ENCODE measurements at regions of chr4 and their contacts with region 1.

Region 1: GRCh38 chr4:119628308-119629141 is at the start of gene PDE5A:
- DNase-seq: peak; percentile 89
- ATAC-seq: peak; percentile 87
- H3K4me3 Mint-ChIP-seq: peak within 1 kb of the TSS; percentile 74
- H3K27ac Mint-ChIP-seq: no peak within 1 kb of the TSS
- H3K4me1 Mint-ChIP-seq: peaks cover 15% of the 10 kb centered on the region
- H3K27me3 Mint-ChIP-seq: peaks cover 19% of the 10 kb centered on the region
- total RNA-seq, gene PDE5A: 0.25 to 0.47 TPM

Region 2: GRCh38 chr4:118981839-118982381 is 646.6 kb before region 1 on chr4:
- CTCF ChIA-PET with region 1: interaction called, 6 read pairs
- POLR2A ChIA-PET with region 1: no interaction called
- intact Hi-C with region 1: loop called (anchors 1 to 5 kb)
- DNase-seq: peak; percentile 73
- ATAC-seq: peak; percentile 60
- H3K4me3 Mint-ChIP-seq: no peak overlapping the region
- H3K27ac Mint-ChIP-seq: no peak overlapping the region
- H3K4me1 Mint-ChIP-seq: no peaks in the 10 kb centered on the region
- H3K27me3 Mint-ChIP-seq: peaks cover 7% of the 10 kb centered on the region

Region 3: GRCh38 chr4:119314356-119314755 is 314.2 kb before region 1 on chr4:
- CTCF ChIA-PET with region 1: interaction called, 4 read pairs
- POLR2A ChIA-PET with region 1: no interaction called
- intact Hi-C with region 1: loop called (anchors 1 kb)
- DNase-seq: peak; percentile 11
- ATAC-seq: peak; percentile 51
- H3K4me3 Mint-ChIP-seq: no peak overlapping the region
- H3K27ac Mint-ChIP-seq: no peak overlapping the region
- H3K4me1 Mint-ChIP-seq: no peaks in the 10 kb centered on the region
- H3K27me3 Mint-ChIP-seq: peaks cover 9% of the 10 kb centered on the region

Region 4: GRCh38 chr4:119615068-119615719 is 13.3 kb before region 1 on chr4:
- CTCF ChIA-PET with region 1: interaction called, 18 read pairs
- POLR2A ChIA-PET with region 1: no interaction called
- intact Hi-C with region 1: no loop called
- DNase-seq: no peak
- ATAC-seq: no peak
- H3K4me3 Mint-ChIP-seq: no peak overlapping the region
- H3K27ac Mint-ChIP-seq: no peak overlapping the region
- H3K4me1 Mint-ChIP-seq: no peaks in the 10 kb centered on the region
- H3K27me3 Mint-ChIP-seq: peaks cover 20% of the 10 kb centered on the region

Region 5: DNA sequence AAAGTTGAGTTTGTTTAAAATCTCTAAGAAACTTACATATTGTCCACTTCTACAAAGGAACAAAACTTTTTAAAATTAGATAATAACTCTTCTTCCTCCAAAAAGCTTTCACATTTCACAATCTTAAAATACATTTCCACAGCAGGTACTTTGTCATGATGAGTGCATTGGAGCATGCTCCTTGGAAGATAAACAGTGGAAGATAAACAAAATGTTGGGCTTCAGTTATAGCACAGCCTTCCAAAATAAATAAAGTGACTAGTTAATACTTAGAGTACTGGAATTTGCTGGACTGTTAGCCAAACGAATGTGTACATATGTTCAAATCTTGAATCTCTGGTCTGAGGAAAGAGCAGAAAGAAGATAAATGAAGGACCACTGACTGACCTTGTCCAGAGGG is 55.0 kb after region 1 on chr4:
- CTCF ChIA-PET with region 1: no interaction called
- POLR2A ChIA-PET with region 1: no interaction called
- intact Hi-C with region 1: no loop called
- DNase-seq: no peak
- ATAC-seq: no peak
- H3K4me3 Mint-ChIP-seq: no peak overlapping the region
- H3K27ac Mint-ChIP-seq: no peak overlapping the region
- H3K4me1 Mint-ChIP-seq: no peaks in the 10 kb centered on the region
- H3K27me3 Mint-ChIP-seq: peaks cover 8% of the 10 kb centered on the region

Region 6: DNA sequence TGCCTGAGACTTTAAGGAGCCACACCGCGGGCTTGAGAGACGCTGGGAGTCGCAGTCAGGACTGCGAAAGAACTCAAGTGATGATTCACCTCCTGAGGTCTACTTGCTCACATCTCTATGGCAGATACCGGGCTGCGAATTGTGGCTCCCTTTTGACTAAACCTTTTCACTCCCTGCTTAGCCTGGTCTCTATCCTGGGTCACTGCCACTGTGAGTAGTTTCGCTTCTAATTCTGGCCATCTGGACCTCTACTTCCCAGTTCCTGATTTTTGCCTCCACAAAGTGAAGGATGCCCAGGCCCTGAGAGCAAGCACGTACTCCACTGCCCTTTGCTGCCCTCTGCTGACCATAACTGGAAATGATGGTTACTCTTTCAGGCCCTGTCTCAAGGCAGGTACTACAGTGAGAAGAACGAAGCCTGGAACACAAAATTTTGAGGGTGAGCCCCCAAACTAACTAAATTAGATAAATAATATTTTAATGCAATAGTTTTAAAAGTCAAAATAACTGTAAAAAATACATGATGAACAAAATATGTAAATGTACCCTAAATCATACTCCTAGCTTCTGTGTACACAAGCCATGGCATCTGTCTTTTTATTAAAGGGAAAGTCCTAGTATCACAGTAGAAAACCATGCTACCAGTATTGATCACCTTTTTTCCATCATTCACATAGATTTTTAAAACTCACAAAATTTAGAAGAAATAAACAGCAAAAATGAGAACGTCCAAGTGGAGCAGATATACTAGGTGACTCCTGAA is 421.4 kb after region 1 on chr4:
- CTCF ChIA-PET with region 1: interaction called, 4 read pairs
- POLR2A ChIA-PET with region 1: interaction called, 3 read pairs
- intact Hi-C with region 1: loop called (anchors 1 kb)
- DNase-seq: peak; percentile 79
- ATAC-seq: peak; percentile 94
- H3K4me3 Mint-ChIP-seq: no peak overlapping the region
- H3K27ac Mint-ChIP-seq: no peak overlapping the region
- H3K4me1 Mint-ChIP-seq: peaks cover 2% of the 10 kb centered on the region
- H3K27me3 Mint-ChIP-seq: no peaks in the 10 kb centered on the region

Region 7: GRCh38 chr4:121072224-121073003 is 1443.9 kb after region 1 on chr4 and contains the start of gene NDNF:
- CTCF ChIA-PET with region 1: no interaction called
- POLR2A ChIA-PET with region 1: no interaction called
- intact Hi-C with region 1: loop called in 1 of 2 experiments (anchors 10 kb)
- DNase-seq: peak; percentile 65
- ATAC-seq: peak; percentile 72
- H3K4me3 Mint-ChIP-seq: peak within 1 kb of the TSS; percentile 73
- H3K27ac Mint-ChIP-seq: no peak within 1 kb of the TSS
- H3K4me1 Mint-ChIP-seq: peaks cover 16% of the 10 kb centered on the region
- H3K27me3 Mint-ChIP-seq: peaks cover 60% of the 10 kb centered on the region
- total RNA-seq, gene NDNF: 0.11 to 0.16 TPM